ENCODE measurements at regions of chr5 and their contacts with region 1.

Region 1: DNA sequence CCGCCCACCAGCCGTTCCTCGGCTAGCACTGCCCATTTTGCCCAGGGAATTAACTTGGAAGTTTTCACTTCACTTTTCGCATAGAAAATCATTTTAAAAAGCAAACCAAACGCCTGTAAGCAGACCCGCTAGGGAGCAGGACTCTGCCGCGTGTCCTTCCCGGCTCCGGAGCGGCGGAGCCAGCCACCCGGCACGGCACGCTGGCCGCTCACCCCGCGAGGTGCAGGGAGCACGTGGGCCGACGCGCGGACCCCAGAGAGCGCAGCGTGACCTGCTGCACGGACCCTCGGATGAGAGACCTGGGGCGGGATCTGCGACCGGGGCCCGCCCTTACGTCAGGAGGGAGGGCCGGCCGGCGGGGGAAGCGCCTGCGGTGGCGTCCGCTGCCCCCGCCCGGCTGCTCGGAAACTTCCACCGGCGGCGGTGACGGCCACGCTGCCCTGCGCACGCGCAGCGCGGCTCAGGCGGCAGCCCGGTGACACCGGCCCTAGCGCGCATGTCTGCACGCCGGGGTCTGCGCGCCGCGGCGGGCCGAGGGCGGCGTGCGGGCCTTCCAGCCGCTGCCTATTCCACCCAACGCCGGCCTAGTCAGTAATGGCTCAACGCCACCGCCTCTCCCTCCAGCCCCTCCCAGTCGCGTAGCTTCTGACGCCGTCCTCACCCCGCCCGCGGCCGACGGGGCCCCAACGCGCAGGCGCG is 506 bp upstream of the TENT4A start:
- DNase-seq: peak; percentile 97
- ATAC-seq: peak; percentile 81
- H3K4me3 Mint-ChIP-seq: peak overlapping the region; percentile 86
- H3K27ac Mint-ChIP-seq: peak overlapping the region; percentile 94
- H3K4me1 Mint-ChIP-seq: peaks cover 41% of the 10 kb centered on the region
- H3K27me3 Mint-ChIP-seq: no peaks in the 10 kb centered on the region

Region 2: DNA sequence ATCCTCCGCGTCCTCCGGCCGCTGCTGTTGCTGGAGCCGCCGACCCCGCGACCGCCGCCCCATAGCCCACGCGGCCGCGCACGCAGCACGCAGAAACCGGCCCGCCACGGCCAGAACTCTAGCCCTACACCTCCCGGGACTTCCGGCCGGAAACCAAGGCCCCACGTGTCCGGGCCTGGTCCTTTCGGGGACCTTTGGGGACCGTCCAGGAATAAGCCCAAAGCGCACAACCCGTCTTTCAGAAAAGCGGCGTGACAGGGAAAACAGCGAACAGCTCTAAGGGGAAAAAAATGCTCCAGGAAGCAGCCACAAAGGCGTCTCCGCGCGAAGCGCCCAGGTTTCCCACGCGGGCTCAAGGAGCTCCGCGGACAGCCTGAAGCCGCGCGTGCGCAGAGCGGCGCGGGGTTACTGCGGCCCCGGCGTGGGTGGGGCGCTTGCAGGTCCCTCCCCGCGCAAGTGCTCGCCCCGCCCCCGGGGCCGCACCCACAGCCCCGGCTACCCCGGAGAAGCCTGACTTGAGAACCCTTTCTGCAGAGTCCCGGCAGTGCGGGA is 79.7 kb before region 1 on chr5 and contains the starts of genes NSUN2 and SRD5A1:
- CTCF ChIA-PET with region 1: no interaction called
- POLR2A ChIA-PET with region 1: interaction called, 24 read pairs
- DNase-seq: peak; percentile 91
- ATAC-seq: peak; percentile 92
- H3K4me3 Mint-ChIP-seq: peak within 1 kb of the TSS; percentile 87
- H3K27ac Mint-ChIP-seq: peak within 1 kb of the TSS; percentile 99
- H3K4me1 Mint-ChIP-seq: peaks cover 48% of the 10 kb centered on the region
- H3K27me3 Mint-ChIP-seq: no peaks in the 10 kb centered on the region
- total RNA-seq, gene NSUN2: 83.0 to 84.7 TPM
- total RNA-seq, gene SRD5A1: 15.9 to 20.4 TPM

Region 3: DNA sequence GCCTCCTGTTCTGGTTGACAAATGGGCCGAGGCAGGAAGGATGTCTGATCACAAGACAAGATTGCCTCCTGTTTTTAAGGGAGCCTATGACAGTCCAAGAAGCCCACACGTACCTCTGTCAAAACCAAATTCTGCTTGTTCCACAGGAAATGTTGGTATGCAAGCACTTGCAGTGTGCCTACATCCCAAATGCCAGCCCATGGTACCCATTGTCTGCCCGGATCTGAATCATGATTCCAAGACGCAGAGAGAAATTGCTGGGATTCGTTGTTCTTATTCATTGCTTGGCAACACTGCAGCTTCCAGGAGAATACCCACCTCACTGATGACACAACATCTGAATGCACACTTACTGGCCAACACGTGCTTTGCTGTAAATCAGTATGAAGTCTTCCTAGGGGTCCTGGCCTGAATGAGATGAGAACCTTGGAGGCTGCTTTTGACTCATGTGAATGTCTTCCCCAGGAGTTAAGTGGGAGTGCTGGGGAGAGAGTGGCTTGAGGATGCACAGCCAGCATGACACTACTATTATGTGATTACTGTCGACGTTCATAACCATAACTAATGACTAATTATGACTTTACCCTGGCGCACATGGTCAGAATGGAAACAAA is 68.0 kb before region 1 on chr5:
- CTCF ChIA-PET with region 1: no interaction called
- POLR2A ChIA-PET with region 1: no interaction called
- DNase-seq: no peak
- ATAC-seq: no peak
- H3K4me3 Mint-ChIP-seq: no peak overlapping the region
- H3K27ac Mint-ChIP-seq: no peak overlapping the region
- H3K4me1 Mint-ChIP-seq: peaks cover 5% of the 10 kb centered on the region
- H3K27me3 Mint-ChIP-seq: no peaks in the 10 kb centered on the region

Region 4: GRCh38 chr5:6686915-6687409 is 25.8 kb before region 1 on chr5:
- CTCF ChIA-PET with region 1: no interaction called
- POLR2A ChIA-PET with region 1: no interaction called
- DNase-seq: peak; percentile 37
- ATAC-seq: peak; percentile 63
- H3K4me3 Mint-ChIP-seq: no peak overlapping the region
- H3K27ac Mint-ChIP-seq: no peak overlapping the region
- H3K4me1 Mint-ChIP-seq: no peaks in the 10 kb centered on the region
- H3K27me3 Mint-ChIP-seq: peaks cover 33% of the 10 kb centered on the region

Measured in activated CD8-positive, alpha-beta T cell treated with anti-CD3 and anti-CD28 coated beads, Interleukin-2, amount 10 ng/mL, durations not matched to agents 7 days and 5 days (primary cell).